Activated naive CD4-positive, alpha-beta T cell treated with anti-CD3 and anti-CD28 coated beads for 36 hours (primary cell): ENCODE measurements at regions of chrX and their contacts with region 1.

Region 1: GRCh38 chrX:7059214-7059838 is 88.2 kb upstream of the STS start:
- DNase-seq: peak; percentile 41
- H3K4me3 Mint-ChIP-seq: no peak overlapping the region
- H3K27ac Mint-ChIP-seq: peak overlapping the region; percentile 61
- H3K4me1 Mint-ChIP-seq: peaks cover 41% of the 10 kb centered on the region
- H3K27me3 Mint-ChIP-seq: no peaks in the 10 kb centered on the region

Region 2: GRCh38 chrX:5388087-5388486 is 1671.2 kb before region 1 on chrX:
- CTCF ChIA-PET with region 1: no interaction called
- intact Hi-C with region 1: no loop called
- DNase-seq: no peak
- H3K4me3 Mint-ChIP-seq: no peak overlapping the region
- H3K27ac Mint-ChIP-seq: no peak overlapping the region
- H3K4me1 Mint-ChIP-seq: no peaks in the 10 kb centered on the region
- H3K27me3 Mint-ChIP-seq: no peaks in the 10 kb centered on the region

Region 3: DNA sequence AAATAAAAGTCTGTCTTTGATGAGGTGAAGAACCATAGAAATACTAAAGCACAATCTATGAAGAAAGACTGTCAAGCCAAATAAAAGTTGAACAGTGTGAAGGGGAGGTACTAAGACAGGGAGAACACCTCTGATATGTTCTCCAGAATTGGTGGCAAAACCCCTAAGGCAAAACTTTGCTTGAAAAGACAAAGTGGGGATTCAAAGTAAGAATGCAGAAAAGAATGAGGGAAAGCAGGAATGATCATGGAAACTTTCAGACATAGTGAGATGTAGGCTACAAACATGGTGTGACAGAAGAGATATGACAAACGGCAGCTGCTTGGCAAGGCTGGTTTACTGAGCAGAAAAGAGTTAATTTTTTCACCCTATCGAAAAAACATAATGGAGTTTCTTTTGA is 64.9 kb before region 1 on chrX:
- CTCF ChIA-PET with region 1: no interaction called
- intact Hi-C with region 1: no loop called
- DNase-seq: no peak
- H3K4me3 Mint-ChIP-seq: no peak overlapping the region
- H3K27ac Mint-ChIP-seq: no peak overlapping the region
- H3K4me1 Mint-ChIP-seq: no peaks in the 10 kb centered on the region
- H3K27me3 Mint-ChIP-seq: no peaks in the 10 kb centered on the region

Region 4: GRCh38 chrX:7083468-7084396 is 24.4 kb after region 1 on chrX:
- CTCF ChIA-PET with region 1: no interaction called
- intact Hi-C with region 1: loop called (anchors 1 kb)
- DNase-seq: peak; percentile 70
- H3K4me3 Mint-ChIP-seq: peak overlapping the region; percentile 19
- H3K27ac Mint-ChIP-seq: peak overlapping the region; percentile 68
- H3K4me1 Mint-ChIP-seq: peaks cover 44% of the 10 kb centered on the region
- H3K27me3 Mint-ChIP-seq: no peaks in the 10 kb centered on the region